RWPE1 (cell line): ENCODE measurements at regions of chr1 and their contacts with region 1.

Region 1: GRCh38 chr1:160416369-160416768 is 16.0 kb downstream of the VANGL2 start:
- DNase-seq: peak; percentile 55
- H3K27ac ChIP-seq: no peak overlapping the region
- CTCF ChIP-seq: peak; percentile 27; the same call in 1 of the 2 replicates

Region 2: GRCh38 chr1:160354388-160354985 is 61.9 kb before region 1 on chr1:
- CTCF ChIA-PET with region 1: interaction called, 10 read pairs
- POLR2A ChIA-PET with region 1: interaction called, 3 read pairs
- DNase-seq: no peak
- H3K27ac ChIP-seq: no peak overlapping the region
- CTCF ChIP-seq: no peak; the same call in 1 of the 2 replicates